ENCODE measurements at regions of chr1 and their contacts with region 1.

Region 1: GRCh38 chr1:228082135-228082891 is at the start of gene ARF1:
- DNase-seq: peak; percentile 80 to 98 (median 88)

Region 2: DNA sequence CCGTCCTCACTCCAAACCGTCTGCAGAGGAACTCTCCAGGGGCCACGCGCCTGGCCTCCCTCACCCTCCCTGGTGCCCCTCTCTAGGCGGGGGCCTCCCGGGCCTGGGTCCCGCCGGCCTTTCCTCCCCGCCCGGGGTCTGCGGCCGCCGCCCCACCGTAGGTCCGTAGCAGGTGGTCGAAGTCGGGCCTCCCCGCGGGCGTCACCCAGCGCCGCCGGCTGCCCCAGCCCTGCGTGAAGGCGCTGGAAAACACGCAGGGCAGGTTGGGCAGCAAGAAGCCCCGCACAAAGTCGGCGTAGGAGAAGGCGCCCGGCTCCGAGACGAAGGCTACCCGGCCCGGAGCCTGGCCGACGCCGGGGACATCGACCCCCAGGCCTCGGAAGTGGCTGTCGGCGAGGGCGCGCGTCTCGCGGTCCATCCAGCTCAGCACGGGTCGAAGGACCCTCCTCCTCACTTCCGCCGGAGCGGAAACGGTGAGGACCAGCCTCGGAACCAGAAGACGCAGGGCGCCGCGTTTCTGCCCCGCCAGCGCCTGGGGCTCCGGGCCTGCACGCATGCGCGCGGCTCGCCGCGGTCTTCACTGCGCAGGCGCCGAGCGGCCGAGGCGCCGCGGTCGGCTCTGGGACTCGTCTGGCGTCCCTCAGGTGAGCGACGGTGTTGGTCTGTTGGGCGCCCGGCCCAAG is 347.3 kb before region 1 on chr1 and contains the starts of genes JMJD4 and SNAP47:
- intact Hi-C with region 1: loop called (anchors 10 kb)
- DNase-seq: peak; percentile 84 to 98 (median 88)

Region 3: GRCh38 chr1:227762233-227762911 is 319.9 kb before region 1 on chr1:
- intact Hi-C with region 1: loop called (anchors 10 kb)
- DNase-seq: peak; percentile 76 to 98 (median 86)

Region 4: GRCh38 chr1:228102791-228103620 is 20.7 kb after region 1 on chr1 and contains the start of gene C1orf35:
- intact Hi-C with region 1: loop called (anchors 2 kb)
- DNase-seq: peak; percentile 81 to 98 (median 89)